ENCODE measurements at regions of chr3 and their contacts with region 1.

Region 1: DNA sequence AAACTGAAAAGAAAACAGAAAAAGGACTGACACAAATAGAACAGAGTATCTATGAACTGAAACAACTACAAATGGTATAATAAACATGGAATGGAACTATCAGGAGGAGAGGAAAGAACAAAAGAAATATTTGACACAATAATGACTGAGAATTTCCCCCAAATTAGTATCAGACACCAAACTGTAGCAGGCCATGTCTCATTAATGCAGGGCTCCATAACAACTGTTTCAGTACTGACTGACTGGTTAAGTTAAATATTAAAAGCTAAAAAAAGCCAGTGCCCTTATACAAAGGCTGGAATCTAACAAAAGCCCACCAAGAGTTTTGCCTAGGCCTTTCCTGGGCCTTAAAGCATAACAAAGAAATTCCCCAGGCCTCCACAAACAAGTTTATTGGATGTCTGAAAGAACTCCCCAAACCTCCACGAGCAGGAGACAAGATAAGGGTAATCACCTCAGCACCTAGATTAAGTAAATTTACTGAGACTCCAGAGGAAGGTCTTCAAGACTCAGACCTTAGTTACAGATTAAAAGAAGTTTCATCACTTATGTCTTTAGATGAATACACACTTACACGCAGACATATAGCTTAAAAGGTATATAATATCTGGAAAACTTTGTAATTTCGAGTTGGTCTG is 45.7 kb downstream of the KPNA1 start:
- DNase-seq: no peak
- ATAC-seq: no peak
- H3K4me3 ChIP-seq: no peak overlapping the region
- H3K27ac ChIP-seq: no peak overlapping the region
- H3K4me1 ChIP-seq: peaks cover 0 to 27% (median 8%) of the 10 kb centered on the region in 12 donors
- H3K27me3 ChIP-seq: no peaks in the 10 kb centered on the region
- CTCF ChIP-seq: no peak
- POLR2A ChIP-seq: no peak

Region 2: DNA sequence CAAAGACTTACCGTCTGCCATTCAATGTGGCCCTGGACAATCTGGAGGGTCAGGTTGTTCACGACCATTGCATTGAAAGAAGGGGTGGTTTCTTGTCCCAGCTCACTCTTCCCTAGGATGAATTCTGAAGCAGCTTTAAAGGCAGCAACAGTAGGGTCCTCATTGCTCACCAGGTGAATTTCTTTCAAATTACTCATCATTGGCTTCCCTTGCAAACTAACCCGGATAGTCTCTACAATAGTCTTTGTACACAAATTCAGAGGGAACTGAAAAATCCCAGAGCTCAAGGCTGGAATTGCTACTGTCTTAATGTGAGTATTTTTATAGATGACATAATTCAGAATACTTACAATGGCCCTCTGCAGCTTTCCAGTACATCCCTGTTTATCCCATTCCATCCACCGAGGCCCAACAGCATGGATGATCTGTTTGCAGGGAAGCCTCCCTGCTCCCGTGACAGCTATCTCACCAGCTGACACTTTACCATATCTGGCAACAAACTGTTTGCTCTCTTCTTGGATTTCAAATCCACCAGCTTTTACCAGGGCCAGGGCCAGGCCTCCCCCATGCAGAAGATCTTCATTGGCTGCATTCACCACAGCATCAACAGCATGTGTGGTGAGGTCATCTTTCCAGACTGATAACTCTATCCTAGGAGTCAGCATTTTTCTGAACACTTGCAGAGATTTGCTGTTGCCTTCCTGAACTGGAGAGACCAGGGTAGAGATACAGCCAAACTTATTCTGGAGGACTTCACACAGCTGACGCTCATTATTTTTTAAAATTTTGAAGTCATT is 86.5 kb after region 1 on chr3:
- intact Hi-C with region 1: loop called in 1 of 10 experiments (anchors 10 kb)
- DNase-seq: peak in 1 of 5 donors; percentile 28
- ATAC-seq: peak; percentile 46 to 74 (median 60)
- H3K4me3 ChIP-seq: no peak overlapping the region
- H3K27ac ChIP-seq: peak overlapping the region in 1 of 12 donors; percentile 3
- H3K4me1 ChIP-seq: peaks cover 0 to 16% (median 3%) of the 10 kb centered on the region in 12 donors
- H3K27me3 ChIP-seq: no peaks in the 10 kb centered on the region
- CTCF ChIP-seq: no peak
- POLR2A ChIP-seq: no peak

Measured in heart left ventricle (tissue), 16 donors.